ENCODE measurements at regions of chr4 and their contacts with region 1.

Region 1: GRCh38 chr4:16443504-16444088 is 217.3 kb upstream of the TAPT1 start:
- DNase-seq: peak; percentile 36
- H3K4me3 ChIP-seq: no peak overlapping the region; a peak in 1 of 4 replicates
- H3K27ac ChIP-seq: no peak overlapping the region
- H3K4me1 ChIP-seq: no peaks in the 10 kb centered on the region
- H3K27me3 ChIP-seq: no peaks in the 10 kb centered on the region; the same call in 1 of the 2 replicates
- CTCF ChIP-seq: peak; percentile 74
- EP300 ChIP-seq: no peak
- RAD21 ChIP-seq: peak; percentile 62

Region 2: GRCh38 chr4:16256343-16256742 is 187.3 kb before region 1 on chr4:
- CTCF ChIA-PET with region 1: no interaction called
- POLR2A ChIA-PET with region 1: no interaction called
- DNase-seq: no peak
- H3K4me3 ChIP-seq: no peak overlapping the region
- H3K27ac ChIP-seq: no peak overlapping the region
- H3K4me1 ChIP-seq: peaks cover 0 to 14% of the 10 kb centered on the region in 2 experiments; a peak in 1 of 4 replicates
- H3K27me3 ChIP-seq: no peaks in the 10 kb centered on the region
- CTCF ChIP-seq: no peak
- EP300 ChIP-seq: no peak
- RAD21 ChIP-seq: no peak

Region 3: DNA sequence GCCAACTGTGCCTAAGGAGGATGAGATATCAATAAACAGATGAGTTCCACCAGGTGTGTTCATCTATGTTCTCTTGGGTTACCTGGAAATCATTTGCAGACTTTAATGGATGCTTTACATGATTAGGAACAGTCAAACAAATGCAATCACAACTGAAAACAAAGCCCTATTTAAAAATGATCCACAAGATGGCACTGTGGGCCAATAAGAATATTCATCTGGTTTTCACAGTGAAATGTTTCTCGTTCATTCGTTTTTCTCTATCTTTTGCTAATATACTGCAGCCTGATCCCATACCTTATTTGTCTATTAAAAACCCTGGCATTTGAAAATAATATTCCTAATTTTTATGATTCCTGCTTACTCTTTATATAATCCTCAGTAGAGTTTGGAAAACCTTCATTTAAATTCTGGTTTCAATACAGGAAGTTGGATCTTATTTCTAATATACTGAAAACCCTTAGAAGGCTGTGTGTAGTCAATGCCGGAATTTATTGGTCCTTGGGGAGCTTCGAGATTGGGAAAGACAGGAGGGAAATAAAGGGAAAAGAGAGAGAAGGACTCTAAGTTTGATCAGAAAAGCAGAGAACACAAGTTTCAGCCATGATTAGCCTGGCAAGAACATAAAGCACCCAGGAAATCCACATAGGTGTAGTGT is 153.6 kb before region 1 on chr4:
- CTCF ChIA-PET with region 1: interaction called, 40 read pairs
- POLR2A ChIA-PET with region 1: no interaction called
- DNase-seq: peak; percentile 51
- H3K4me3 ChIP-seq: peak overlapping the region in 1 of 2 experiments; percentile 26; a peak in 1 of 4 replicates
- H3K27ac ChIP-seq: no peak overlapping the region
- H3K4me1 ChIP-seq: peaks cover 0 to 5% of the 10 kb centered on the region in 2 experiments; a peak in 2 of 4 replicates
- H3K27me3 ChIP-seq: no peaks in the 10 kb centered on the region
- CTCF ChIP-seq: peak; percentile 82
- EP300 ChIP-seq: no peak
- RAD21 ChIP-seq: peak; percentile 81

Region 4: DNA sequence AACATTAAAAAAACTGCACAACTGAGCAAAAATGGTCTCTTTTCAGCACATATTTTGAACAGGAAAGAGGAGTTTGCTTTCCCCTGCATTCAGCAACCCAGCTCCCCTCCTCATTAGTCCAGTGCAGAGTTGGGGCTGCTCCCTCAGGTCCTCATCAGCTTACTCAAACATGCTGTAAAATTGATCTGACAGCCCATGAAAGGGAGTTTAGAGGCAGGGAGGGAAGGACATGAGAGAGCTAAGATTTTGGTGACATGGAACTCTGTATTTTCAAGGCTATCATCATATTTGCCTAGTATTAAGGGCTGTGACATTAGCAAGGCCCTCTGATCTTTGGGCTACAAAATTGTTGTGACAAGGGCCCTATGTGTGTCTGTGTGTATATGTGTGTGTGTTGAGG is 11.7 kb before region 1 on chr4:
- CTCF ChIA-PET with region 1: interaction called, 21 read pairs
- POLR2A ChIA-PET with region 1: no interaction called
- DNase-seq: no peak
- H3K4me3 ChIP-seq: no peak overlapping the region
- H3K27ac ChIP-seq: no peak overlapping the region
- H3K4me1 ChIP-seq: no peaks in the 10 kb centered on the region
- H3K27me3 ChIP-seq: no peaks in the 10 kb centered on the region
- CTCF ChIP-seq: no peak
- EP300 ChIP-seq: no peak
- RAD21 ChIP-seq: no peak